Activated CD4-positive, alpha-beta T cell treated with anti-CD3 and anti-CD28 coated beads for 36 hours (primary cell): ENCODE measurements at regions of chr9 and their contacts with region 1.

Region 1: DNA sequence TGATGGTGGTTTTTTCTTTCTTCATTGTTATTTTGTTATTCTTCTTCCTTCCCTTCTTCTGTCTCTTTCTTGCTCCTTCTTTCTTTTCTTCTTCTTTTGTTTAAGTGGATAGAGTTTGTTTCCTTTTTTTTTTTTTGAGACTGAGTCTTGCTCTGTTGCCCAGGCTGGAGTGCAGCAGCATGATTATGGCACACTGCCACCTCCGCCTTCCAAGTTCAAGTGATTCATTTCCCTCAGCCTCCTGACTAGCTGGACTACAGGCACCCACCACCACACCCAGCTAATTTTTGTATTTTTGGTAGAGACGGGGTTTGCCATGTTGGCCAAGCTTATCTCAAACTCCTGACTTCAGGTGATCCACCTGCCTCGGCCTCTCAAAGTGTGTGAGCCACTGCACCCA is 40.3 kb downstream of the JAK2 start:
- DNase-seq: no peak
- ATAC-seq: no peak
- H3K4me3 Mint-ChIP-seq: no peak overlapping the region
- H3K27ac Mint-ChIP-seq: no peak overlapping the region
- H3K4me1 Mint-ChIP-seq: no peaks in the 10 kb centered on the region
- H3K27me3 Mint-ChIP-seq: no peaks in the 10 kb centered on the region

Region 2: DNA sequence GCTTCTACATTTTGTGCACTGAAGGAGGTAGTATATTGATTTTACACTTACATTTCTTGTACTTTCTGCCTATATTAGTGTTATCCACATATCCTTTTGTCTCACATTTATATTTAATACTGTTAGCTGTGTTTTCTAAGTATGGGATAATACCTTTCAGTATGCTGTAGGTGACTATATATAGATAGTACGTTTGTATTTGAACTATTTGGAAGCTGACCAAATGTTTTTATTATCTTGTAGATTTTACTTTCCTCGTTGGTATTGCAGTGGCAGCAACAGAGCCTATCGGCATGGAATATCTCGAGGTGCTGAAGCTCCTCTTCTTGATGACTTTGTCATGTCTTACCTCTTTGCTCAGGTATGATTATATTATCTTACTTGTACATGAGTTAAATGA is 18.7 kb after region 1 on chr9:
- CTCF ChIA-PET with region 1: no interaction called
- POLR2A ChIA-PET with region 1: no interaction called
- intact Hi-C with region 1: loop called in 1 of 2 experiments (anchors 2 kb)
- DNase-seq: no peak
- ATAC-seq: no peak
- H3K4me3 Mint-ChIP-seq: no peak overlapping the region
- H3K27ac Mint-ChIP-seq: no peak overlapping the region
- H3K4me1 Mint-ChIP-seq: no peaks in the 10 kb centered on the region
- H3K27me3 Mint-ChIP-seq: no peaks in the 10 kb centered on the region